ENCODE measurements at regions of chr2 and their contacts with region 1.

Region 1: GRCh38 chr2:44955593-44956392 is 14.3 kb downstream of the SIX3 start:
- DNase-seq: peak; percentile 90
- ATAC-seq: peak; percentile 77
- H3K4me3 Mint-ChIP-seq: peak overlapping the region; percentile 54
- H3K27ac Mint-ChIP-seq: no peak overlapping the region
- H3K4me1 Mint-ChIP-seq: peaks cover 14% of the 10 kb centered on the region
- H3K27me3 Mint-ChIP-seq: peaks cover 51% of the 10 kb centered on the region

Region 2: DNA sequence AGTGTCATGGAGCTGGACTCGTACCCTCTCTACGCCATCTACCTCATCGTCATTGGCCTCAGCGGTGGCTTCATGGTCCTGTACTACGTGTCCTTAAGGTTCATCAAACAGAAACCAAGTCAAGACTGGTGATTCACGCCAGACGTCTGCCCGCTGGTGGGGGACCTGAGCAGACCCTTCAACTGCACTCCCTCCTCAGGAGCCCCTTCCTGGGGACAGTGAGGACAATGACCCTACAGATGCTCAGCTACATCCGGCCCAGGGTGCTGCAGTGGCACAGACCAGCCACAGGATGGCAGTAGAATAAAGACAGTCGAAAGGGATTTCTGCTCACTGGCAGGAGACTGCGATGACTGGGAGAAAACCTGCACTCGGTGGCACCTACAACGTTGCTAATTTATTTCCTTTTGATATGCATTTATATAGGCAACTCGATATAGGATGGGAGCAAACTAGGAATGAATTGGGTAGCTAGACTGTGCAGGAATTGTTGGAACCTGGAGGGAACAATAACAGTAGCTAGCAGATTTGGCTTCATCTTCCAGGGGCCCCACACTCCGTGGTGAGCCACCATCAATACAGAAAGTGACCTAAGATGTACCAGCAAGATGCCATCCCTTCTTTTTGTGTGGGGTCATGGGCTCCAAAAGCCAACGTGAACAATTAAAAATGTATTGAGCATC is 1077.9 kb before region 1 on chr2:
- CTCF ChIA-PET with region 1: no interaction called
- POLR2A ChIA-PET with region 1: no interaction called
- intact Hi-C with region 1: loop called in 1 of 2 experiments (anchors 5 kb)
- DNase-seq: peak; percentile 84
- ATAC-seq: peak; percentile 88
- H3K4me3 Mint-ChIP-seq: no peak overlapping the region
- H3K27ac Mint-ChIP-seq: no peak overlapping the region
- H3K4me1 Mint-ChIP-seq: peaks cover 6% of the 10 kb centered on the region
- H3K27me3 Mint-ChIP-seq: peaks cover 11% of the 10 kb centered on the region

Region 3: GRCh38 chr2:44087036-44087713 is 868.6 kb before region 1 on chr2:
- CTCF ChIA-PET with region 1: interaction called, 4 read pairs
- POLR2A ChIA-PET with region 1: no interaction called
- intact Hi-C with region 1: loop called in 1 of 2 experiments (anchors 1 kb)
- DNase-seq: peak; percentile 91
- ATAC-seq: peak; percentile 90
- H3K4me3 Mint-ChIP-seq: peak overlapping the region; percentile 67
- H3K27ac Mint-ChIP-seq: peak overlapping the region; percentile 93
- H3K4me1 Mint-ChIP-seq: peaks cover 22% of the 10 kb centered on the region
- H3K27me3 Mint-ChIP-seq: no peaks in the 10 kb centered on the region

Region 4: DNA sequence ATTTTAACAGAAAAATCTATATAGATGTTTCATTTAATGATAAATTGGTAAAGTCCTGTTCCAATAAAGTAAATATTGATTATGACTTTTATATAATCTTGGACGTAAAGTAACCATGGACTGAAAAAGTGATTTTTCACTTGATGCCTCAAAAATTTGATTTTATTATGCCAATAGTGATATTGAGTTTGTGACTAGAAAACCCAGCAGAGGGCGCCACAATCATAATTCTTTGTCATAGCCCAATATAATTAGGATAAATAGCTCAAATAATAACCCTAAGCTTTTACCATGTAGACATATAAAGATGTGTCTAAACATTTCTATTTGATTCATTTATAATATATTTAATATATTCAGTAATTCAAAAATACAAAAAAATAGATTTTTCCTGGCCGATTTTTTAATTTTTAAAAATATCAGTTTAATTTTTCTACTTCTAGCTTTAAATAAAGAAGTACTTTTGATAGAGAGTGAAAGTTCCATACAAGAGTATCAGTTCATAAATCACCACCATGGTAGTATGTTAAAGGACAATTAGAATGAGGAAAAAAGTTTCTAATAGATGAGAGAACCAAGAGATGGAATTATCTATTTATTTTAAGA is 563.4 kb before region 1 on chr2:
- CTCF ChIA-PET with region 1: interaction called, 32 read pairs
- POLR2A ChIA-PET with region 1: no interaction called
- intact Hi-C with region 1: loop called (anchors 1 to 5 kb)
- DNase-seq: peak; percentile 69
- ATAC-seq: no peak
- H3K4me3 Mint-ChIP-seq: no peak overlapping the region
- H3K27ac Mint-ChIP-seq: no peak overlapping the region
- H3K4me1 Mint-ChIP-seq: peaks cover 3% of the 10 kb centered on the region
- H3K27me3 Mint-ChIP-seq: no peaks in the 10 kb centered on the region

Region 5: GRCh38 chr2:44560352-44560751 is 395.4 kb before region 1 on chr2:
- CTCF ChIA-PET with region 1: no interaction called
- POLR2A ChIA-PET with region 1: interaction called, 3 read pairs
- intact Hi-C with region 1: loop called in 1 of 2 experiments (anchors 1 kb)
- DNase-seq: peak; percentile 46
- ATAC-seq: no peak
- H3K4me3 Mint-ChIP-seq: no peak overlapping the region
- H3K27ac Mint-ChIP-seq: no peak overlapping the region
- H3K4me1 Mint-ChIP-seq: no peaks in the 10 kb centered on the region
- H3K27me3 Mint-ChIP-seq: no peaks in the 10 kb centered on the region

Region 6: GRCh38 chr2:44974064-44974715 is 18.4 kb after region 1 on chr2:
- CTCF ChIA-PET with region 1: interaction called, 17 read pairs
- POLR2A ChIA-PET with region 1: interaction called, 3 read pairs
- intact Hi-C with region 1: no loop called
- DNase-seq: peak; percentile 24
- ATAC-seq: peak; percentile 36
- H3K4me3 Mint-ChIP-seq: no peak overlapping the region
- H3K27ac Mint-ChIP-seq: no peak overlapping the region
- H3K4me1 Mint-ChIP-seq: no peaks in the 10 kb centered on the region
- H3K27me3 Mint-ChIP-seq: peaks cover 10% of the 10 kb centered on the region

Region 7: GRCh38 chr2:45494269-45494977 is 538.6 kb after region 1 on chr2:
- CTCF ChIA-PET with region 1: interaction called, 4 read pairs
- POLR2A ChIA-PET with region 1: no interaction called
- intact Hi-C with region 1: loop called in 1 of 2 experiments (anchors 1 kb)
- DNase-seq: no peak
- ATAC-seq: no peak
- H3K4me3 Mint-ChIP-seq: no peak overlapping the region
- H3K27ac Mint-ChIP-seq: peak overlapping the region; percentile 38
- H3K4me1 Mint-ChIP-seq: peaks cover 36% of the 10 kb centered on the region
- H3K27me3 Mint-ChIP-seq: no peaks in the 10 kb centered on the region